Psoas muscle (tissue), 8 donors: ENCODE measurements at regions of chr3 and their contacts with region 1.

Region 1: GRCh38 chr3:155244216-155244615 is 49.3 kb downstream of the STRIT1 start:
- DNase-seq: no peak
- ATAC-seq: no peak
- H3K4me3 ChIP-seq: no peak overlapping the region
- H3K27ac ChIP-seq: no peak overlapping the region
- H3K4me1 ChIP-seq: peaks cover 10% of the 10 kb centered on the region
- H3K27me3 ChIP-seq: no peaks in the 10 kb centered on the region
- CTCF ChIP-seq: no peak

Region 2: GRCh38 chr3:155282385-155283091 is 38.3 kb after region 1 on chr3:
- intact Hi-C with region 1: loop called (anchors 5 kb)
- DNase-seq: no peak
- ATAC-seq: peak in 3 of 4 donors; percentile 25 to 59 (median 43)
- H3K4me3 ChIP-seq: no peak overlapping the region
- H3K27ac ChIP-seq: peak overlapping the region; percentile 62
- H3K4me1 ChIP-seq: peaks cover 14% of the 10 kb centered on the region
- H3K27me3 ChIP-seq: no peaks in the 10 kb centered on the region
- CTCF ChIP-seq: no peak